ENCODE measurements at regions of chr1 and their contacts with region 1.

Region 1: GRCh38 chr1:11037740-11038182 is 9.3 kb downstream of the MASP2 start:
- DNase-seq: peak; percentile 92
- ATAC-seq: peak; percentile 99
- H3K4me3 Mint-ChIP-seq: no peak overlapping the region
- H3K27ac Mint-ChIP-seq: no peak overlapping the region
- H3K4me1 Mint-ChIP-seq: peaks cover 5% of the 10 kb centered on the region
- H3K27me3 Mint-ChIP-seq: peaks cover 2% of the 10 kb centered on the region
- CTCF ChIP-seq: peak; percentile 97

Region 2: GRCh38 chr1:10712568-10713362 is 325.0 kb before region 1 on chr1:
- CTCF ChIA-PET with region 1: no interaction called
- POLR2A ChIA-PET with region 1: no interaction called
- intact Hi-C with region 1: no loop called
- DNase-seq: no peak
- ATAC-seq: no peak
- H3K4me3 Mint-ChIP-seq: no peak overlapping the region
- H3K27ac Mint-ChIP-seq: no peak overlapping the region
- H3K4me1 Mint-ChIP-seq: no peaks in the 10 kb centered on the region
- H3K27me3 Mint-ChIP-seq: peaks cover 4% of the 10 kb centered on the region
- CTCF ChIP-seq: no peak

Region 3: DNA sequence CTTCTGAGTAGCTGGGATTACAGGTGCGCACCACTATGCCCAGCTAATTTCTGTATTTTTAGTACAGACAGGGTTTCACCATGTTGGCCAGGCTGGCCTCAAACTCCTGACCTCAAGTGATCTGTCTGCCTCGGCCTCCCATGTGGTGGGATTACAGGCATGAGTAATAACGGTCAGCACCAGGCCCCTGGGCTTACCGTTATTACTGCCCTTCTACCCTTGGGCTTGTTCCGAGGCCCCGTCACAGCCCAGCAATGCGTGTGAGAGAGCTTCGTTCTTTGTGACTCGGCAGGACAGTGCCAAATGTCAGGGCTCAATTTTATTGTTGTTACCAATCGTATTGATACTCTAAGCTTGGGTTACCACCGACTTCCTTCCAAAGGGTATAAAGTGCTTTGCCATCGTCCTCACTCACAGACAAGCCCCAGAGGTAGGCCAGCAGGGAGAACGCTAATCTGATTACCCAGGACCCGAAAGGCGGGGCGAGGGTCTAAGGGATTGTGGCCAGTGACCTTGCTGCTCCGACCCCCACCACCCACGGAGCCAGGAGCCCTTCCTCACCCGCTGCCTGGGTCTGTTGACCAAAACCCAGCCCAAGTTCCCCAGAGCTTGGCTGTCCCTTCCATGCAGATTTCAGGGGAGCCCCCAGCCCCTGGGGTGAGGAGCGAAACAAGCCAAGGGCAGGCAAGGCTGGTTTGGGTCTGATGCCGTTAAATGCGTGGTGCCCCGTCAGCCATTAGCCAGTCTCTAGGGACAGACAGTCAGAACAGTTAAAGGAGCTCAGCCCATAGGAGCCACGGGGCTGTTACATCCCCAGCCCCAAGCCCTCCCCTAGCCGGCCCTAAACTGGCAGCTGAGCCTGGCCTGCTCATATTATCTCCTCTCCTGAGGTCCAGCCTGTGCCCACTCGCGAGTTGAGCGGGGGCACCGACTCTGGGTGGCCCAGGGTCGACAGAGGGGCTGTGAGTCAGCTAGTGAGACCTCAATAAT is 186.4 kb before region 1 on chr1:
- CTCF ChIA-PET with region 1: no interaction called
- POLR2A ChIA-PET with region 1: no interaction called
- intact Hi-C with region 1: no loop called
- DNase-seq: no peak
- ATAC-seq: no peak
- H3K4me3 Mint-ChIP-seq: no peak overlapping the region
- H3K27ac Mint-ChIP-seq: no peak overlapping the region
- H3K4me1 Mint-ChIP-seq: no peaks in the 10 kb centered on the region
- H3K27me3 Mint-ChIP-seq: no peaks in the 10 kb centered on the region
- CTCF ChIP-seq: no peak

Region 4: DNA sequence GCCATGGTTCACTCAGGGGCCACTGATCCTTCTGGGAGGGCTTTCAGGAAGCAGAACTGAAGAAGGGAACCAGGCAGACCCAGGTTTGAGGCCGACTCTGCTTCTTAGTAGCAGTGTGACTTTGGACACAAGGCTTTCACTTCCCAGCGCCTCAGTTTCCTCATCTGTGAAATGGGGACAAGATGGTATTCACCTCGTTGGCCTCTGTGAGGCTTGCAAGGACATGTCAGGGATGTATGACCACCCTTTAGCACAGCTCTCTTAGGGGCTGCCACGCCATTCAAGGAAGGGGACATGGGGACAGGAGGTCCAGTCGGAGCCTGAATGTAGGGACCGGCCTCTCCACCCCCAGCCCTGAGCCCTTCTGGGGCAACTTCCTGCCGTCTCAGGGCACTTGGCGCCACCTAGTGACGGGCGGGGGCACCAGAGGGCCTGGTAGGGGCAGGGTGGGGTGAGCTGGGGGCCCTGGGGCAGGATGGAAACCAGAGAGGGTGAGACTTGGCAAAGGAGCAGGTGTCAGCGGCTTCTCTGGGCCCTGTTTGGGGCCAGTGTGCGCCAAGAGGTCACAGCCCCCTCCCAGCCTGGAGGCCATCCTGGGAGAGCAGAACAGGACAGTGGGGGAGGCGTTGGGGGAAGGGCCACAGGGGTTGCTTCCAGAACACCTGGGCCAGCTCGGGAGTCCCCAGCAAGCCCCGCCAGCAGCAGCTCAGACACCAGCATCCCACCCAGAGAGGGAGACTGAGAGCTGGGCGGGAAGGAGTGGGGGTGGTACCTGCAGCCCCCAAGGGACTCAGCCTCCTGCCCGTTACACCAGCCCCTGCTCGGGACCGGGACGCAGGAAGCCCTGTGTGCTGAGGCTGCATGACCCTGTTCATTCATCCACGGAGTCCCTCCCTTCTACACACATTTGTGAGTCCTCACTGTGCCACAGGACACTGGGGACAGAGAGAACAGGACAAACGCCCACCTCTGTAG is 127.8 kb before region 1 on chr1:
- CTCF ChIA-PET with region 1: no interaction called
- POLR2A ChIA-PET with region 1: no interaction called
- intact Hi-C with region 1: no loop called
- DNase-seq: peak; percentile 88
- ATAC-seq: peak; percentile 93
- H3K4me3 Mint-ChIP-seq: no peak overlapping the region
- H3K27ac Mint-ChIP-seq: no peak overlapping the region
- H3K4me1 Mint-ChIP-seq: peaks cover 16% of the 10 kb centered on the region
- H3K27me3 Mint-ChIP-seq: peaks cover 2% of the 10 kb centered on the region
- CTCF ChIP-seq: peak; percentile 85

Region 5: DNA sequence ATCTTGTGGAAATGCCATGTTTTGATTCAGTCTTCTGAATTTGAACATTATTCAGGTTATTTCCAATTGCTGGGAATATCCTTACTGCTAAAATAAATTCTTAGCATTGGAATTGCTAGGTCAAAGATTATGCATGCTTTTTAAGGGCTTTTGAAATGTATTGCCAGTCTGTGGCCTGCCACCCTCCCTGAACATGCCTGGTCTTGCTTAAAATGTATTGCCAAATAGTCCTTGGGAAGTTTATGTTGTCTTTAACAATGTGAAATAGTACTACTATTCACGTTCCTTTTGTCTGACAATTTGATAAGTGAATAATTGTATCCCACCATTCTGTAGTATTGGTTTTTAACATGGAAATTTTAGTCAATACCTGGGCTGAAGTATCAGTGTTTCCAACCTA is 11.7 kb before region 1 on chr1:
- CTCF ChIA-PET with region 1: interaction called, 21 read pairs
- POLR2A ChIA-PET with region 1: interaction called, 5 read pairs
- intact Hi-C with region 1: no loop called
- DNase-seq: no peak
- ATAC-seq: no peak
- H3K4me3 Mint-ChIP-seq: no peak overlapping the region
- H3K27ac Mint-ChIP-seq: peak overlapping the region; percentile 75
- H3K4me1 Mint-ChIP-seq: peaks cover 18% of the 10 kb centered on the region
- H3K27me3 Mint-ChIP-seq: no peaks in the 10 kb centered on the region
- CTCF ChIP-seq: no peak

Region 6: DNA sequence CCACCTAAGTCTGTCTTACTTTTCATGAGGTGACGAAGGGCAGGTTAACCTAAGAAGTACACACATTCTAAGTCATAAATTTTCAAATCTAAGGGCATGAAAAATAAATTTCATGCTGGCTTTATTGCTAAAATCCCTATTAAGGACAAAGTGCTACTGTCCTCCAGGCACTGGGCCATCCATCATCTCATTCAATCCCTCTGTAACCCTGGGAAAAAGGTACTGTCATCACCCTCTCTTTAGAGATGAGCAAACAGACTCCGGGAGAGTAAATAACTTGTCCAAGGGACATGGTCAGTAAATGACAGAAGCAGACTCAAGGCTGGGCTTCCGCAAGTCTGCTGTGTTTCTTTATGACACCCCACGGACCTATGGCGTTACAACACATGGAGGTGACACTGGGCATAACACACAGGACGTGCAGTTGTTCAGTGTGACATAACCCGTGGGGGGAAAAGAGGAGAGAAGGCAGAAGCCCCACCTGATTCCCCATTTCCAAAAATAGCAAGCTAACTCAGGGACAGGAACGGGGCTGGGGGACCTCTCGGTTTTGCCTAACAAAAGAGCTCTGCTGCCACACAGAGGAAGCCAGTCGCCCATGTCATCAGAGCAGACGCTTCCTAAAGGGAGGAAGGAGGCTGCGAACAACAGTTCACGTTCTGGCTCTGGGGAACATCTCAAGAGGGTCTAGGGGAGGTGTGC is 34.6 kb after region 1 on chr1:
- CTCF ChIA-PET with region 1: interaction called, 31 read pairs
- POLR2A ChIA-PET with region 1: interaction called, 6 read pairs
- intact Hi-C with region 1: loop called (anchors 5 kb)
- DNase-seq: no peak
- ATAC-seq: no peak
- H3K4me3 Mint-ChIP-seq: no peak overlapping the region
- H3K27ac Mint-ChIP-seq: peak overlapping the region; percentile 57
- H3K4me1 Mint-ChIP-seq: peaks cover 19% of the 10 kb centered on the region
- H3K27me3 Mint-ChIP-seq: no peaks in the 10 kb centered on the region
- CTCF ChIP-seq: no peak

Region 7: DNA sequence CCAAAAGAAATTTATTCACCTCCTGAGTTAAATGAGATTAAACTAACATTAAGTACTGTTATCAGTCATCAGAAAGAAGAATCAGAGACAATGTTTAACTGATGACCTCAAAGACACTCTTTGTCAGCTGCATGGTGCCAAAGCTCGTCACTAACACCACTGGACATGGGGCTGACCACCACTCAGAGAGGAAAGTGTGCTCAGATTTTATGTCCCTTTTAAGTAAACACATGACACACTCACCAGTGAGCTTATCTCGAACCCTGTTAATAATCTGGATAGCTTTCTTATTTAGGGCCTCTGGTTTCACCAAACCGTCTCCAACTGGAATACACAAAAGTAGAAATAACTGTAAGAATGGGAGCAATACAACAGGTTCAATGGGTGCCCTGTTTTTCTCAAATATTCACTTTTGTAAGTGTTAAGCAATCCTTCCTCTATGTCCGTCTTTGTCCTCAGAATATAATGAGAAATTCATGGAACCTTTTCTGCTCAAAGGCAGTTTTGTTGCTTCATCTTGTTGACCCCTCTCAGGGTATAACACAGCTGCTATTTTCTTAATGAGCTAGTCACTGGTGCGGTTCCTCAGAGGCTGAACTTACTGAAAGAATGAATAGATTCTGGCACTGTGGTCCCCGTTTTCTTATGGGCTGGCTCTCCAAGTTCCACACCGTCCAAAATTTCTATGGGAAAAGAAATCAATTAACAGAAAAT is 71.4 kb after region 1 on chr1:
- CTCF ChIA-PET with region 1: interaction called, 10 read pairs
- POLR2A ChIA-PET with region 1: no interaction called
- intact Hi-C with region 1: no loop called
- DNase-seq: no peak
- ATAC-seq: no peak
- H3K4me3 Mint-ChIP-seq: no peak overlapping the region
- H3K27ac Mint-ChIP-seq: no peak overlapping the region
- H3K4me1 Mint-ChIP-seq: no peaks in the 10 kb centered on the region
- H3K27me3 Mint-ChIP-seq: no peaks in the 10 kb centered on the region
- CTCF ChIP-seq: no peak

Region 8: GRCh38 chr1:11187931-11188330 is 150.2 kb after region 1 on chr1:
- CTCF ChIA-PET with region 1: interaction called, 12 read pairs
- POLR2A ChIA-PET with region 1: no interaction called
- intact Hi-C with region 1: no loop called
- DNase-seq: no peak
- ATAC-seq: no peak
- H3K4me3 Mint-ChIP-seq: no peak overlapping the region
- H3K27ac Mint-ChIP-seq: no peak overlapping the region
- H3K4me1 Mint-ChIP-seq: no peaks in the 10 kb centered on the region
- H3K27me3 Mint-ChIP-seq: no peaks in the 10 kb centered on the region
- CTCF ChIP-seq: no peak

Region 9: GRCh38 chr1:11233208-11233607 is 195.4 kb after region 1 on chr1:
- CTCF ChIA-PET with region 1: interaction called, 11 read pairs
- POLR2A ChIA-PET with region 1: no interaction called
- intact Hi-C with region 1: no loop called
- DNase-seq: no peak
- ATAC-seq: no peak
- H3K4me3 Mint-ChIP-seq: no peak overlapping the region
- H3K27ac Mint-ChIP-seq: no peak overlapping the region
- H3K4me1 Mint-ChIP-seq: peaks cover 5% of the 10 kb centered on the region
- H3K27me3 Mint-ChIP-seq: no peaks in the 10 kb centered on the region
- CTCF ChIP-seq: no peak

Measured in activated CD8-positive, alpha-beta T cell treated with anti-CD3 and anti-CD28 coated beads for 36 hours (primary cell).